ENCODE measurements at regions of chr2 and their contacts with region 1.

Region 1: DNA sequence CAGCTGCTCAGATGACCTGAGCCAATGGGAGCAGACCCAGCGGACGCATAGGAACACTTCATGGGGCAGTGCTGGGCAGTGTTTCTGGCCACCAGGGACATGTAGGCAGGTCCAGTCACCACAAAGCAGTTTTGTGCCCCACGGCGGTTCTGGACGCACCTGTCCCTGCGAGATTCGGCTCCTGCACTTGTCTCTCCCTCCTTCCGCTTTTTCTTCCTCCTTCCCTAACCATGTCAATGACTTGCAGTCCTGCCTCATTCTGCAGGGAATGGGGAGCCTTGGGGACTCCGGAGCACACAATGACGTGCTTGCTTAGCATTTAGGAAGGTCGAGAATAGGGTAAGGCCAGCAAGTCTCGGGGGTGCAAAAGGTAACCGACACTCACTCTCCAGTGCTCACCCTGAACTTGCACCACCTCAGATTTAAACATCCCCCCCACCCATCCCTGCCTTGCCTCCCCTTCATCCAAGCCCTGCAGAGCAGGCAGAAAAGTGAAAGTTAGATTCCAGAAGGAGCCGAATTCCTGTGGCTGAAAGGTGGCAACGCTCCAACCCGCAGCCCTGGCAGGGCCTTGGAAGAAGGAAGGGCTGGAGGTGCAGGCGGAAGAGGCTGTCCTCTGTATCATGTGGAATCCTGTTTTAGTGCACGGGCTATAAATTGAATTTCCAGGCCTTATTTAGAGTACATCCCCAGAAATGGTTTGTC is 40.5 kb upstream of the ATG16L1 start:
- DNase-seq: peak; percentile 84
- H3K4me3 ChIP-seq: peak overlapping the region in 1 of 3 experiments; percentile 12
- H3K27ac ChIP-seq: no peak overlapping the region
- H3K4me1 ChIP-seq: peaks cover 44% of the 10 kb centered on the region
- H3K27me3 ChIP-seq: no peaks in the 10 kb centered on the region
- CTCF ChIP-seq: no peak

Region 2: GRCh38 chr2:233178994-233179847 is 31.8 kb before region 1 on chr2:
- CTCF ChIA-PET with region 1: no interaction called
- dilution Hi-C with region 1: no loop called
- in situ Hi-C with region 1: no loop called
- intact Hi-C with region 1: no loop called
- DNase-seq: no peak
- H3K4me3 ChIP-seq: no peak overlapping the region
- H3K27ac ChIP-seq: no peak overlapping the region
- H3K4me1 ChIP-seq: no peaks in the 10 kb centered on the region
- H3K27me3 ChIP-seq: no peaks in the 10 kb centered on the region
- CTCF ChIP-seq: no peak

Region 3: GRCh38 chr2:233242231-233242927 is 31.4 kb after region 1 on chr2:
- CTCF ChIA-PET with region 1: no interaction called
- dilution Hi-C with region 1: no loop called
- in situ Hi-C with region 1: no loop called
- intact Hi-C with region 1: loop called (anchors 2 kb)
- DNase-seq: no peak
- H3K4me3 ChIP-seq: no peak overlapping the region
- H3K27ac ChIP-seq: no peak overlapping the region
- H3K4me1 ChIP-seq: peaks cover 25% of the 10 kb centered on the region
- H3K27me3 ChIP-seq: no peaks in the 10 kb centered on the region
- CTCF ChIP-seq: no peak

Measured in mammary epithelial cell (primary cell).